T-cell (primary cell): ENCODE measurements at regions of chr7 and their contacts with region 1.

Region 1: DNA sequence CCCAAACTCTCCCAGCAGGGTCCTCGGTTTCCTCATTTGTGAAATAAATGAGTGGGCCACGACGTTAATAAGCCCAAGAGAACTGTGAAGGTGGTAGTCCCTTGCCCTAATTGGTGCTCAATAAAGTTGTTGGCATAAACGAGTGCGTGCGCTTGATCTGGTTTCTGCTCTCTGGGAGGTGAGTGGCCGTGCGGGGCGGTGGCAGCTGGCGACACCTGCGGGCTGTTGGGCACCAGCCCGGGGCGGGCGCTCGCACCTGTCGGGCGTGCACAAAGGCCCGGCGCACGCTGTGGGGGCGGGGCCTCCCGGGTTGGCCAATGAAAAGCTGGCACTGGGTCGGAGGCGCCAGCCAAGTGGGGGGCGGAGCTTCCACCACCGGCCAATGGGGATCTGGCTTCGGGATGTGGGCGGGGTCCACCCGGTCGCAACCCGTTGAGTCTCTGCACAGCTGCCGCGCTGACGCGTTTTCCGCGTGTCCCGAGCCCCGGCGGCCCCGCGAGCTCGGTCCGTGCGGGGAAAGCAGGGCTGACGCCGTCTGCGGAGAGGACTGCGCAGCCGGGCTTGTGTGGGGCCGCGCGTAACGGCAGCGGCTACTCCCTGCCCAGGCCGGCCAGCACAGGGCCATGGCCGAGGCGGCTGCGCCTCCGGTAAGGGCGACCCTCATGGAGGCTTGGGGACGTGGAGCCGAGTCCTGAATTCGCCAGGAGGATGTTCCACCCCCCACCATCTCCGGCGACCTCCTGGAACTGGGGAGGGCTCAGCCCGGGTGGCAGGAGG is 23.0 kb downstream of the ZNF783 start:
- DNase-seq: peak; percentile 91 to 99 (median 97)
- ATAC-seq: peak; percentile 92 to 97 (median 95)
- H3K4me3 ChIP-seq: peak overlapping the region; percentile 61 to 74
- H3K4me3 Mint-ChIP-seq: peak overlapping the region; percentile 89 to 93 (median 90)
- H3K27ac ChIP-seq: peak overlapping the region; percentile 32
- H3K27ac Mint-ChIP-seq: peak overlapping the region; percentile 88 to 89
- H3K4me1 ChIP-seq: peaks cover 18 to 41% of the 10 kb centered on the region in 2 experiments
- H3K4me1 Mint-ChIP-seq: peaks cover 40 to 50% (median 41%) of the 10 kb centered on the region in 3 donors
- H3K27me3 ChIP-seq: no peaks in the 10 kb centered on the region
- H3K27me3 Mint-ChIP-seq: no peaks in the 10 kb centered on the region

Region 2: DNA sequence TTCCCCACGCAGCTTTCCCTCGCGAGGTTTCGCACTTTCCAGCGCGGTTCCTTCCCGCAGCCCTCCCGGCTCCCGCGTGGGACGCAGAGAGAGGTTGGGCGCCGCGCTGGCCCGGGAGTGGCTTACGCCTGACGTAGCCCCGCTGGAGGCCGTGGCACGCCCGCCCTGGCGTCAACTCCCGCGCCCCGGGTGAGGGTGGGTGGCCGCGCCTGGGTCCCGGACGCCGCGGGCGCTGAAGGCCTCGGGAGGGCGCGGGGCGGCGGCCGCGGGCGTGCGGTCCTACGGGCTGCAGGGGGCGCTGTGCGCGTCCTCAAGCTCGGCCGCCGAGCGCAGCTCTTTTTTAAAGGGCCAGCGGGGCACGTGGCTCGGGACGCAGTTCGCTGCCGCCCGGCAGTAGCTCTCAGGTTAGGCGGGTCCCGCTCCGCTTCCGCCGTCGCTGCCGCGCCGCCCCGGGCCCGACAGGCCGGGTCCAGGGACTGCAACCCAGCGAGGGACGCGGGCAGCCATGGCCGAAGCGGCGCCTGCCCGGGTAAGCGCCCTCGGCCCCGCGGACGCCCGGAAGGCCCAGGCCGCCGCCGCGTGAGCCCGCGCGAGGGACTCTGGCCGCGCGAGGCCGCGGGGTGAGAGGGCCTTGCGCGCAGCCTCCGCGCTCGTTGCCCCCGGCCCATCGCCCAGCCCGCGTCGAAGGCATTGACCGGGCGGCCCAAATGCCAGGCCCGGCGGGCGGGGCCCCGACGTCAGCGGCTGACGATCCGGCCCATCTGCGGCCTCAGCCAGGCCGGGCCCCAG is 23.0 kb before region 1 on chr7 and contains the start of gene ZNF783:
- CTCF ChIA-PET with region 1: interaction called, 11 to 65 read pairs
- POLR2A ChIA-PET with region 1: interaction called in 1 of 2 experiments, 18 read pairs
- DNase-seq: peak; percentile 64 to 96 (median 79)
- ATAC-seq: peak; percentile 95 to 96 (median 95)
- H3K4me3 ChIP-seq: peak within 1 kb of the TSS; percentile 53 to 67
- H3K4me3 Mint-ChIP-seq: peak within 1 kb of the TSS; percentile 81 to 89 (median 83)
- H3K27ac ChIP-seq: peak within 1 kb of the TSS; percentile 82
- H3K27ac Mint-ChIP-seq: peak within 1 kb of the TSS; percentile 93
- H3K4me1 ChIP-seq: peaks cover 2 to 30% of the 10 kb centered on the region in 2 experiments
- H3K4me1 Mint-ChIP-seq: peaks cover 33 to 40% (median 34%) of the 10 kb centered on the region in 3 donors
- H3K27me3 ChIP-seq: no peaks in the 10 kb centered on the region
- H3K27me3 Mint-ChIP-seq: no peaks in the 10 kb centered on the region
- total RNA-seq, gene ZNF783: 31.1 to 49.4 (median 46.6) TPM

Region 3: GRCh38 chr7:149310113-149310836 is 25.2 kb after region 1 on chr7:
- CTCF ChIA-PET with region 1: interaction called in 1 of 2 experiments, 10 read pairs
- POLR2A ChIA-PET with region 1: no interaction called
- DNase-seq: peak in 2 of 35 experiments; percentile 9 to 44
- ATAC-seq: peak; percentile 38 to 45 (median 42)
- H3K4me3 ChIP-seq: no peak overlapping the region
- H3K4me3 Mint-ChIP-seq: no peak overlapping the region
- H3K27ac ChIP-seq: no peak overlapping the region
- H3K27ac Mint-ChIP-seq: peak overlapping the region in 1 of 2 donors; percentile 11
- H3K4me1 ChIP-seq: no peaks in the 10 kb centered on the region
- H3K4me1 Mint-ChIP-seq: peaks cover 0 to 3% (median 0%) of the 10 kb centered on the region in 3 donors
- H3K27me3 ChIP-seq: no peaks in the 10 kb centered on the region
- H3K27me3 Mint-ChIP-seq: no peaks in the 10 kb centered on the region